ENCODE measurements at regions of chr7 and their contacts with region 1.

Region 1: DNA sequence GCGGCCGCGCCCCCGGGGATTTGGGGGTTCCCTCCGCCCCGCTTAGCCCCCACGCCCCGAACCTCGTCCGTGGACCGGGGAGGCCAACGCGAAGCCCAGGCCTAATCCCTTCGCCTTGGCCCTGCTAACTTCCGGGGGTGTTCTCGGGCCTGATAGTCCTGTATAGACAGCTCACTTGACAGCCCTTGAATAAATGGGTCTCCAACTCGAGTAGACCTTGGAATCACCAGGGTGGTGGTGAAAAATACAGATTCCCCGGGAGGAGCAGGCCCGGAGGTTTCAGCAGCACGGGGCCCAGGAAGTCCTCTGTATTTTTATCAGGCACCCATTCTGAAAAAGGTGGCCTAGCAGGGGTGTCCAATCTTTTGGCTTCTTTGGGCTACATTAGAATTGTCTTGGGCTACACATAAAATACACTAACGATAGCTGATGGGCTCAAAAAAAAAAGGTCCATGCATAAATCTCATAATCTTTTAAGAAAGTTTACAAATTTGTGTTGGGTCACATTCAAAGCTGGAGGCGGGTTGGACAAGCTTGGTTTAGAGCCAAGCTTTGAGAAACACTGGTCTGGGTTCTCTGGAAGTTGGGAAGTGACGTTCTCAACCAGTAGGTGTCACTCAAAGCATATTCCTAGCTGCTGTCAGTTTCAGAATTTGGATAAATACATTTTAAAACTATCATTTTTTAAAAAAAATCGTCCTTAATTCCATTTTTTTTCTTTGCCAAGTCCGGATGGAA is 221.7 kb downstream of the PHTF2 start:
- DNase-seq: peak; percentile 46
- H3K4me3 Mint-ChIP-seq: peak overlapping the region; percentile 65
- H3K27ac Mint-ChIP-seq: no peak overlapping the region
- H3K4me1 Mint-ChIP-seq: peaks cover 10% of the 10 kb centered on the region
- H3K27me3 Mint-ChIP-seq: peaks cover 40% of the 10 kb centered on the region

Region 2: DNA sequence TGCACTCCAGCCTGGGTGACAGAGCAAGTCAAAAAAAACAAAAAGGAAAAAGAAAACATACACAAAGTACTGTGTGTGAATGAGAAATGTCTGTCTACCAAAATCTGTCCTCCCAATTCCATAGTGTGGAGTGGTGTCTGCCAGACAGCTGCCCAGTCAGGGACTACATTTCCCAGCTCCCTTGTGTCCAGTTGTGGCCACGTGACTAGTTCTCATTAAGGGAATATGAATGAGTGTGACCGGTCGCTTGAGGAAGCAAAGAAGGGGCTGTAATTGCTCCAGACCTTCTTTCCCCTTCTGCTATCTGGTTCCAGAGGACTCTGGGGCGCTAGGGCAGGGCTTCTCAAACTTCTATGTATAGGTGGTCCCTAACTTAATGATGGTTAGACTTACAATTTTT is 17.6 kb before region 1 on chr7:
- CTCF ChIA-PET with region 1: interaction called, 10 read pairs
- POLR2A ChIA-PET with region 1: no interaction called
- DNase-seq: no peak
- H3K4me3 Mint-ChIP-seq: no peak overlapping the region
- H3K27ac Mint-ChIP-seq: no peak overlapping the region
- H3K4me1 Mint-ChIP-seq: no peaks in the 10 kb centered on the region
- H3K27me3 Mint-ChIP-seq: no peaks in the 10 kb centered on the region

Region 3: DNA sequence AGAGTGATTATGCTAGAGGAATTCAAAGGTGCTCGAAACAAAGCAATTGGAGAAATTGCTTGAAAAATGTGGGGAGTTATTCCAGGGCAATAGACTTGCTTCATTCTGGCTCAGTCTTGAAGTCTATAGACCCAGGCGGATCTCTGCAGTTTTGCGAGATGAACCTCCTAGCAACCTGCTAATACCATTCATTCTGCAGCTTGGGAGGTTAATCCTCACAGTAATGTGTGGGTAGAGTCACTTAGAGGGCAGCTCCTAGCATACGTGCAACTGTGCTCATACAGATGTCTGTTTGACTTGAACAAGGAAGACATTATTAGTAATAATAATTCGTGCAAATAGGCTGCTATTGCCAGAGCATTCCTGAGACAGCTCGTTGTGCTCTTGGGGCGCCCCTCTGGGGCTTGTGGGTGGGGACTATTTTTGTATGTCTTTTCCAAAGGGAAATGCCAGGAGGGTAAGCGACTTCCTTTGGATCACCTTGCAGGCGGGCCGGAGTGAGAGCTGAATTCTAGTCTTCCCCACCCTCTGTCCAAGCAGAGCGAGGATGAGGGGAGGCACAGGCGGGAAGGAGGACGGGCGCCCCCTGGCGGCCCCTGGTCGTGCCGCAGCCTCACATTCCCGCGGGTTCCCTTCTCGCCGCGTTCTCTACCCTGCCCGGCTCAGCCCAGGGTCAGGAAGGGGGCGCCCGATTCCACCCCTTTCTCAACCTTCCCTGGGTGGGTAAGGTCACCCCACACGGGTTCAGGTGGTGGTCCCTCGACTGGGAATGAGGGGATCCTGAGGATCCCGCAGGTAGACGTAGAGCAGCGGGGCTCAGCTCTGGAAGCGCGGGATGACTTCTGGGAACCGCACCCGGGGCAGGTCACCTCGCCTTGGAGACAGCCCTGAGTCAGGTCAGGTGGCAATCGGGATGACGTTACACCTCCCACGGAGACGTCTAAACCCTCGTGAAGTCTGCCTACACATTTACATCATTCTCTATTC is 19.8 kb after region 1 on chr7:
- CTCF ChIA-PET with region 1: interaction called, 17 read pairs
- POLR2A ChIA-PET with region 1: no interaction called
- DNase-seq: peak; percentile 50
- H3K4me3 Mint-ChIP-seq: no peak overlapping the region
- H3K27ac Mint-ChIP-seq: no peak overlapping the region
- H3K4me1 Mint-ChIP-seq: peaks cover 2% of the 10 kb centered on the region
- H3K27me3 Mint-ChIP-seq: peaks cover 11% of the 10 kb centered on the region